Activated CD4-positive, alpha-beta T cell treated with anti-CD3 and anti-CD28 coated beads, Interleukin-2, amount 10 ng/mL, durations not matched to agents 24 days and 14 days (primary cell): ENCODE measurements at regions of chr3 and their contacts with region 1.

Region 1: GRCh38 chr3:188309437-188310269 is 155.7 kb downstream of the LPP start:
- DNase-seq: peak; percentile 79
- H3K4me3 Mint-ChIP-seq: peak overlapping the region; percentile 62
- H3K27ac Mint-ChIP-seq: peak overlapping the region; percentile 87
- H3K4me1 Mint-ChIP-seq: peaks cover 22% of the 10 kb centered on the region
- H3K27me3 Mint-ChIP-seq: peaks cover 3% of the 10 kb centered on the region

Region 2: GRCh38 chr3:188286087-188286513 is 23.6 kb before region 1 on chr3:
- intact Hi-C with region 1: loop called (anchors 1 kb)
- DNase-seq: no peak
- H3K4me3 Mint-ChIP-seq: peak overlapping the region; percentile 4
- H3K27ac Mint-ChIP-seq: peak overlapping the region; percentile 80
- H3K4me1 Mint-ChIP-seq: peaks cover 48% of the 10 kb centered on the region
- H3K27me3 Mint-ChIP-seq: no peaks in the 10 kb centered on the region

Region 3: GRCh38 chr3:188320757-188321156 is 11.1 kb after region 1 on chr3:
- intact Hi-C with region 1: loop called (anchors 1 kb)
- DNase-seq: no peak
- H3K4me3 Mint-ChIP-seq: no peak overlapping the region
- H3K27ac Mint-ChIP-seq: peak overlapping the region; percentile 29
- H3K4me1 Mint-ChIP-seq: peaks cover 48% of the 10 kb centered on the region
- H3K27me3 Mint-ChIP-seq: peaks cover 4% of the 10 kb centered on the region

Region 4: DNA sequence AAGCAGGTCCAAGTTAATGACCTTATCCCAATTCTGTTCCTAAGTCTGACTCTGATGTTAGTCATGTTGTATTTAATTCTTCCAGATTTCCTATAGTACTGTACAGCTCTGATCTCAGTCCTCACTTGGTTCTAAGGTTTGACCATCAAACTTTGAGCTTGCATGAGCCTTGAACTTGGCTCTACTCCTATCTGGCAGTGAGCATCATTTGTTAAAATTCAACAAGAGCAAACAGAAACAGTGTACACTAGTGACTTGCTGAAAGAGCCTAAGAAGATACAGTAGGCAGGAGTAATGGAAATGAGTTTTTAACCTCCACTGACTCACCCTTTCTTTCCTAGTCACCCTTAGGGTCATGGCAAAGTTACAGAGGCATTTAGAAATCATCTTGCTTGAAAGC is 411.0 kb after region 1 on chr3:
- intact Hi-C with region 1: loop called (anchors 10 kb)
- DNase-seq: no peak
- H3K4me3 Mint-ChIP-seq: no peak overlapping the region
- H3K27ac Mint-ChIP-seq: no peak overlapping the region
- H3K4me1 Mint-ChIP-seq: peaks cover 13% of the 10 kb centered on the region
- H3K27me3 Mint-ChIP-seq: peaks cover 4% of the 10 kb centered on the region